ENCODE measurements at regions of chr12 and their contacts with region 1.

Region 1: DNA sequence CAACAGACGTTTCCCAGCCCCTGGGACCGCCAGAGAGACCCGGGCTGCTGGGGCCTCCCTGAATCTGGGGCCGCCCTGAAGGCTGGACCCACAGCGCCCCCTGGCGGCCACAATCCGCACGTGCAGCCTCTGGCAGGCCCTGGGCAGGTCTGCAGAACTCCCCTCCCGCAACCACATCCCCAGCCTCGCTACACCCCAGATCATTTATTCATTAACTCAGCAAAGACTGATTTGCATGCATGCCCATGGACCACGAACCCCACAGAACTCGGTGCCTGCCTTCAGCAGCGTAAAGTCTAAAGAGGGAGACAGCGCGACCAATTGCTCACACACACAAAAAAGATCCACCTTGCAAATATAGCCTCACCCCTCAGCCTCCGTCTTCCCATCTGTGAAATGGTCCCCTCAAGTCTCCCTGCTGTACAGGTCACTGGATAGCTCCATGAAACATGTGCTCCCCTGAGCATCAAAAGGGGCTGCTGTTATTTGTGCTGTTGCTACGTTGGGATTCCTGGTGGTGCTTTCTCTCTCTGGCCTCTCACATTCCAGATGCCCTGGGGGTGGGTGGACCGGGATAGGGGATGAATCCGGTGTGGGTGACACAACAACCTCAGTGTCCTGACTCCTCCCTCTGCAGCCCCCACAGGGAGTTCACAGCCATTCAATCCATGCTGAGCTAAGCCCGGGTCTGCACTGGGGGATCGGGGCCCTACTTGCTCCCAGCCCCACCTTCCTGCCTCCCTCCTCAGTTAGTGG is 96.4 kb downstream of the SCARB1 start:
- DNase-seq: peak; percentile 62
- ATAC-seq: peak; percentile 87
- H3K4me3 ChIP-seq: no peak overlapping the region
- H3K27ac ChIP-seq: no peak overlapping the region
- H3K4me1 ChIP-seq: peaks cover 30% of the 10 kb centered on the region
- H3K27me3 ChIP-seq: peaks cover 0 to 5% of the 10 kb centered on the region in 2 experiments; a peak in 2 of 5 replicates
- CTCF ChIP-seq: peak; percentile 95
- EP300 ChIP-seq: no peak
- POLR2A ChIP-seq: no peak
- RAD21 ChIP-seq: peak; percentile 92

Region 2: GRCh38 chr12:124036674-124037109 is 730.6 kb before region 1 on chr12:
- CTCF ChIA-PET with region 1: interaction called, 6 read pairs
- POLR2A ChIA-PET with region 1: no interaction called
- in situ Hi-C with region 1: loop called (anchors 10 kb)
- intact Hi-C with region 1: loop called (anchors 5 kb)
- DNase-seq: peak; percentile 15
- ATAC-seq: peak; percentile 54
- H3K4me3 ChIP-seq: no peak overlapping the region
- H3K27ac ChIP-seq: no peak overlapping the region
- H3K4me1 ChIP-seq: no peaks in the 10 kb centered on the region
- H3K27me3 ChIP-seq: peaks cover 2 to 3% of the 10 kb centered on the region in 2 experiments; a peak in 2 of 5 replicates
- CTCF ChIP-seq: peak; percentile 73
- EP300 ChIP-seq: no peak
- POLR2A ChIP-seq: no peak
- RAD21 ChIP-seq: peak; percentile 66; the same call in 1 of the 2 replicates

Region 3: GRCh38 chr12:124044809-124045321 is 722.4 kb before region 1 on chr12:
- CTCF ChIA-PET with region 1: no interaction called
- POLR2A ChIA-PET with region 1: no interaction called
- in situ Hi-C with region 1: loop called (anchors 10 kb)
- intact Hi-C with region 1: no loop called
- DNase-seq: no peak
- ATAC-seq: no peak
- H3K4me3 ChIP-seq: no peak overlapping the region
- H3K27ac ChIP-seq: no peak overlapping the region
- H3K4me1 ChIP-seq: no peaks in the 10 kb centered on the region
- H3K27me3 ChIP-seq: peaks cover 0 to 6% of the 10 kb centered on the region in 2 experiments; a peak in 2 of 5 replicates
- CTCF ChIP-seq: no peak
- EP300 ChIP-seq: no peak
- POLR2A ChIP-seq: no peak
- RAD21 ChIP-seq: no peak

Region 4: GRCh38 chr12:124359671-124360581 is 407.3 kb before region 1 on chr12:
- CTCF ChIA-PET with region 1: no interaction called
- POLR2A ChIA-PET with region 1: no interaction called
- in situ Hi-C with region 1: loop called (anchors 10 kb)
- intact Hi-C with region 1: loop called (anchors 10 kb)
- DNase-seq: no peak
- ATAC-seq: no peak
- H3K4me3 ChIP-seq: no peak overlapping the region
- H3K27ac ChIP-seq: no peak overlapping the region
- H3K4me1 ChIP-seq: no peaks in the 10 kb centered on the region
- H3K27me3 ChIP-seq: no peaks in the 10 kb centered on the region
- CTCF ChIP-seq: no peak
- EP300 ChIP-seq: no peak
- POLR2A ChIP-seq: no peak
- RAD21 ChIP-seq: no peak

Region 5: GRCh38 chr12:124369055-124369900 is 398.0 kb before region 1 on chr12:
- CTCF ChIA-PET with region 1: no interaction called
- POLR2A ChIA-PET with region 1: no interaction called
- in situ Hi-C with region 1: no loop called
- intact Hi-C with region 1: loop called (anchors 10 kb)
- DNase-seq: peak; percentile 69
- ATAC-seq: peak; percentile 88
- H3K4me3 ChIP-seq: peak overlapping the region in 1 of 3 experiments; percentile 47; a peak in 1 of 6 replicates
- H3K27ac ChIP-seq: peak overlapping the region; percentile 77
- H3K4me1 ChIP-seq: peaks cover 37% of the 10 kb centered on the region
- H3K27me3 ChIP-seq: no peaks in the 10 kb centered on the region
- CTCF ChIP-seq: peak; percentile 71
- EP300 ChIP-seq: no peak; a peak in 1 of 4 replicates
- POLR2A ChIP-seq: no peak
- RAD21 ChIP-seq: peak; percentile 55

Region 6: GRCh38 chr12:124518051-124518932 is 249.0 kb before region 1 on chr12:
- CTCF ChIA-PET with region 1: no interaction called
- POLR2A ChIA-PET with region 1: no interaction called
- in situ Hi-C with region 1: no loop called
- intact Hi-C with region 1: loop called (anchors 5 kb)
- DNase-seq: peak; percentile 93
- ATAC-seq: peak; percentile 95
- H3K4me3 ChIP-seq: peak overlapping the region; percentile 79 to 85 (median 83)
- H3K27ac ChIP-seq: peak overlapping the region; percentile 95
- H3K4me1 ChIP-seq: peaks cover 37% of the 10 kb centered on the region
- H3K27me3 ChIP-seq: no peaks in the 10 kb centered on the region
- CTCF ChIP-seq: no peak
- EP300 ChIP-seq: peak in 1 of 2 experiments; percentile 9; a peak in 1 of 4 replicates
- POLR2A ChIP-seq: peak in 1 of 2 experiments; percentile 61; a peak in 2 of 4 replicates
- RAD21 ChIP-seq: no peak

Region 7: GRCh38 chr12:124567661-124568373 is 199.4 kb before region 1 on chr12:
- CTCF ChIA-PET with region 1: no interaction called
- POLR2A ChIA-PET with region 1: no interaction called
- in situ Hi-C with region 1: loop called (anchors 5 kb)
- intact Hi-C with region 1: loop called (anchors 10 kb)
- DNase-seq: peak; percentile 19
- ATAC-seq: peak; percentile 68
- H3K4me3 ChIP-seq: peak overlapping the region; percentile 76 to 90 (median 82)
- H3K27ac ChIP-seq: no peak overlapping the region
- H3K4me1 ChIP-seq: peaks cover 28% of the 10 kb centered on the region
- H3K27me3 ChIP-seq: peaks cover 4 to 17% of the 10 kb centered on the region in 2 experiments; a peak in 4 of 5 replicates
- CTCF ChIP-seq: peak; percentile 46
- EP300 ChIP-seq: no peak
- POLR2A ChIP-seq: no peak
- RAD21 ChIP-seq: no peak

Measured in HepG2 (cell line).